Heart left ventricle (tissue), 16 donors: ENCODE measurements at regions of chr6 and their contacts with region 1.

Region 1: DNA sequence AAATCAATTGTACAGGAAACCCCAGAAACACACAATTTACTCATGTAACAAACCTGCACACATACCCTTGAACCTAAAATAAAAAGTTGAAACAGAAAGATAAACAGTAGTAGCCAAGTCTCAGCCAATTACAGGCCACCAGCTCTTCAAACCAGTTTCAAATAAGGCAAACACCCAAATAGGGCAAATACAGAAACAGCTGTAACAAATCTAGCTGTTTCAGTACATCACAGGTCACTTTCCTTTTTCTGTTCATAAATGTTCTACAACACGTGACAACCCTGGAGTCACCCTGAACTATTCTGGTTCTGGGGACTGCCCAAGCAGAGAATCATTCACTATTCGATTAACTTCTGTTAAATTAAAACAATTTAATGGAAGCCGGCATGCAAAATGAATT is 329.0 kb downstream of the GJA1 start:
- DNase-seq: no peak
- ATAC-seq: no peak
- H3K4me3 ChIP-seq: no peak overlapping the region
- H3K27ac ChIP-seq: no peak overlapping the region
- H3K4me1 ChIP-seq: peaks cover 0 to 17% (median 0%) of the 10 kb centered on the region in 12 donors
- H3K27me3 ChIP-seq: no peaks in the 10 kb centered on the region
- CTCF ChIP-seq: no peak
- POLR2A ChIP-seq: no peak

Region 2: GRCh38 chr6:121236984-121237383 is 527.5 kb before region 1 on chr6:
- intact Hi-C with region 1: no loop called
- DNase-seq: no peak
- ATAC-seq: no peak
- H3K4me3 ChIP-seq: no peak overlapping the region
- H3K27ac ChIP-seq: no peak overlapping the region
- H3K4me1 ChIP-seq: no peaks in the 10 kb centered on the region
- H3K27me3 ChIP-seq: no peaks in the 10 kb centered on the region
- CTCF ChIP-seq: no peak
- POLR2A ChIP-seq: no peak

Region 3: GRCh38 chr6:121711472-121711871 is 53.0 kb before region 1 on chr6:
- intact Hi-C with region 1: loop called in 1 of 10 experiments (anchors 10 kb)
- DNase-seq: peak in 4 of 5 donors; percentile 32 to 68 (median 58)
- ATAC-seq: peak; percentile 71 to 91 (median 74)
- H3K4me3 ChIP-seq: no peak overlapping the region
- H3K27ac ChIP-seq: peak overlapping the region in 8 of 12 donors; percentile 13 to 62 (median 32)
- H3K4me1 ChIP-seq: peaks cover 0 to 6% (median 0%) of the 10 kb centered on the region in 12 donors
- H3K27me3 ChIP-seq: no peaks in the 10 kb centered on the region
- CTCF ChIP-seq: no peak
- POLR2A ChIP-seq: no peak

Region 4: GRCh38 chr6:121726596-121726995 is 37.9 kb before region 1 on chr6:
- intact Hi-C with region 1: loop called in 1 of 10 experiments (anchors 5 kb)
- DNase-seq: no peak
- ATAC-seq: peak in 1 of 4 donors; percentile 61
- H3K4me3 ChIP-seq: no peak overlapping the region
- H3K27ac ChIP-seq: no peak overlapping the region
- H3K4me1 ChIP-seq: peaks cover 0 to 15% (median 1%) of the 10 kb centered on the region in 12 donors
- H3K27me3 ChIP-seq: no peaks in the 10 kb centered on the region
- CTCF ChIP-seq: no peak
- POLR2A ChIP-seq: no peak

Region 5: DNA sequence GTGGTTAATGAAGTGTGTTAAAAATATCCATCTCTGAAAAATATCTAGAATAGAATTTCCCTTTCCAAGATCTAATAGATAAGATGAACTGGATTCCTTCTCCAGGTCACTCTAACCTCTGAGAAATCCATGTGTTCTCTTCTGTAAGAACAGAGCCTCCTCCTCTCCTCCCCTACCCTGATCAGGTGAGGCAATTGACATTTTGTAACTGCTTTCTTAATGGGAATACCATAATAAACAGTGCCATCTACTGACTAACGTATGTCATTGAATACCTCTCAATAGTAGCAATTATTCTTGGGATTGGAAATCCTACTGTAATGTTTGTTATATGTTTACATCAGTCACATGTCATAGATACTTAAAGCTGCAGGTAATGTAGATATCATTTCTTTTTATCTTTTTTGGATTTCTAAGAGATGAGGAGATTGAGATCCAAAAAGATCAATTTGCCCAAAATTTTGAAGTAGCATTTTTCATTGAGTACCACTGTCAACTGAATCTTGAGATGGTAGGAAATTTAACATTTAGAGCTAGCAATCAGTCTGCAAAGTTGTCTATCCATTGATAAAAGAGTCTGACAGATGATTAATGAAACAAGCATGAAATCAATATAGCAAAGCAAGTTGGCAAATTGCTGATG is 269.2 kb after region 1 on chr6:
- intact Hi-C with region 1: no loop called
- DNase-seq: no peak
- ATAC-seq: peak; percentile 71 to 90 (median 86)
- H3K4me3 ChIP-seq: no peak overlapping the region
- H3K27ac ChIP-seq: peak overlapping the region in 3 of 12 donors; percentile 6 to 30 (median 9)
- H3K4me1 ChIP-seq: peaks cover 0 to 8% (median 0%) of the 10 kb centered on the region in 12 donors
- H3K27me3 ChIP-seq: no peaks in the 10 kb centered on the region
- CTCF ChIP-seq: peak; percentile 48 to 77 (median 63)
- POLR2A ChIP-seq: no peak